ENCODE measurements at regions of chr4 and their contacts with region 1.

Region 1: DNA sequence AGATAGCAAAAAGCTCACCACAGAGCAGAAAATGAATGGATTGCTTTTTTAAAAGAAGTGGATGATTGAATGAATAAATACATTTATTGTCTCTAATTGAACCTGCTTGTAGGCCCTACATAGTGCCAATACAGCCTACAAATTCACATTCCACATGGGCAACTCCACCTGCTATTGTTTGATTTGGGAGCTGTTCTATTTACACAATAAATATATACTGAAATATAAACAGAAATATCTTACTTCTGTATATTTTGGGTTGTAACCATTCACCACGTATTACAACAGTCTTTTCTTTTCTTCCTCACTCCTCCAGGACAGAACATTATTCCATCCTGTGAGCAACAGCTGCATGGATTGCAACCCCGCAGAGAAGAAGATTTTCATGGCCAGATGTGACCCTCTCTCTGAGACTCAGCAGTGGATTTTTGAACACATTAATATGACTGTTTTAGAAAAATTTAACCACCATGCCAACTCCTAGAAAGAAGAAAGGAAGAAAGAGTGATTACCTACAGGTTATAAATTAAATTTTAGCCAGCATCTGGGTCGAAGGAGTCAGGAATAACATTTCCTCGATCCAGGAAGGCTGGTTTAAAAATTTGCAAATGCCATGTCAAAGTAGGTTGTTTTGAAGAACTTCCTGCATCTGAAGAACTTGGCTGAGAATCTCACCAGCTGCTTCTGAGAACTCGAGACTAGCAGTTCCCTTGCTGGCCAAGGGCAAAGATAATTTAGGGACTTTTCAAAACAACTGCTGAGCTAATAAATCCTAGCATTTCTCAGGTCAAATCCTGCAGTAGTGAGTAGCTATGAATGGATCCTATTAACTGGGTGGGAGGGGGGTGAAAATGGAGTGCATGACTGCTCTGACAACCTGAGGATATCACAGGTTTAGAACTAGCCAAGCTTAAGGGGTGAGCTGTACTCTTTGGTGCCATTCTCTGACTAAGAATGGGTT is 128.7 kb upstream of the GALNT7 start:
- DNase-seq: no peak
- ATAC-seq: peak; percentile 65
- H3K4me3 ChIP-seq: no peak overlapping the region
- H3K27ac ChIP-seq: no peak overlapping the region
- H3K4me1 ChIP-seq: no peaks in the 10 kb centered on the region; a peak in 1 of 5 replicates
- H3K27me3 ChIP-seq: no peaks in the 10 kb centered on the region
- CTCF ChIP-seq: no peak
- EP300 ChIP-seq: no peak
- POLR2A ChIP-seq: no peak
- RAD21 ChIP-seq: no peak

Region 2: DNA sequence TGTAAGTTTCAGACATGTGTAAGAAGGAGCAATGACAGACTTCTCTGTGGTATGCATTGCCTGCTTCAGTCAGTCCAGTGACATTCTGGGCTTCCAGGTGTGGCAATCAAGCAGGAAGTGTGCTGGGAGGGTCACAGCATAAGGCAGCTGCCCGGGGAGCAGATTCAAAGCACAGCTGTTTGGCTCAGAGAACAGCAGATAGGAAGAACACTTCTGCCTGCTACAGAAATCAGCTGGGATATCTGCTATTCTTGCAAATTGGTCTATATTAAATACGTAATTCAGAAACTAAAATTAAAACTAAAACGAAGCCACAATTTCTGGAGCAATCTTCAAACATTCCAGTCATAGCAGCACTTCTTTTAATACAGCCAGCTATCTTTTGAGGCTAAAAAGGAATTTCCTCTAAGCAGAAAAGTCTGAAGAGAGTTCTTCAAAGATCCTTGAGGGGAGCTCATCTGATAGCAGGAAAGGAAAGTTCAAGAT is 81.2 kb after region 1 on chr4:
- CTCF ChIA-PET with region 1: no interaction called
- POLR2A ChIA-PET with region 1: no interaction called
- in situ Hi-C with region 1: no loop called
- intact Hi-C with region 1: loop called (anchors 5 kb)
- DNase-seq: peak in 3 of 4 experiments; percentile 15 to 62 (median 31)
- ATAC-seq: peak; percentile 83
- H3K4me3 ChIP-seq: no peak overlapping the region
- H3K27ac ChIP-seq: 0 out of 3 replicates have a peak overlapping the region, but pooled peaks have one; percentile 2
- H3K4me1 ChIP-seq: peaks cover 7 to 19% of the 10 kb centered on the region in 2 experiments; a peak in 3 of 5 replicates
- H3K27me3 ChIP-seq: no peaks in the 10 kb centered on the region
- CTCF ChIP-seq: no peak
- EP300 ChIP-seq: no peak
- POLR2A ChIP-seq: no peak
- RAD21 ChIP-seq: no peak

Measured in K562 (cell line).